SK-N-SH (cell line): ENCODE measurements at regions of chrX and their contacts with region 1.

Region 1: DNA sequence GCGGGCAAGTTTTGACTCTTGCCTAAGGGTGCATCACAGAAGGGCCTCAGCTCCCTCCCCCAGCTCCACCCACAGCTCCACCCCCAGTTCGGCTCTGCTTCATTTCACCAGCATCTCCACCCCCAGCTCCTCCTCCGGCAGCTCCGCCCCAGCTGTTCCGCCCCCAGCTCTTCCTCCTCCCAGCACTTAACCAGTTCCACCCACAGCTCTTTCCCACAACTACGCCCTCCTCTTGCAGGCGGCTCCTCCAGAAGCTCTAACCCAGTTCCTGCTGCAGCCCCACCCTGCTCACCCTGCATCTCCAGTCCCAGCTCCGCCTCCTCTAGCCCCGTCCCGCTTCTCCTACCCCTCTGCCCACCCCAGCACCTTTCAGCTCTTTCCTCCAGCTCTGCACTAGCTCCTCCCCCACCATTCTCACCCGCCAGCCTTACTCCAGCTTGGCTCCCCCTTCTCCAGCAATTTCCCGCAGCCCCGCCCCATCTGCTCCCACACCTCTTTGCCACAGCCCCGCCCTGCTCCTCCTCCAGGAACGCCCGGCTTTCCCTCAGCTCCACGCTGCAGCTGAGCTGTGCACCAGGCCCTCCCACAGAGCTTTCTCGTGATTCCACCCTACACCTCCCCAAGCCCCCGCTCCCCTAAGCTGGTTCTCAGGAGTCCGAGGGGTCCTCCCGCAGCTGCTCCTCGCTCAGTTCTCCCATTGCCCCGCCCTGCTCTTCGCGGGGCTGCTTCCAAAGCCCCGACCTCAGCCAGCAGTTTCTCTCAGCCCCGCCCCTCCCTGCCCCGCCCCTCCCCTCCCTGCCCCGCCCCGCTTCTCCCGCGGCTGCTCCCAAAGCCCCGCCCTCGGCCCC is 1.3 kb upstream of the EOLA1 start:
- DNase-seq: peak; percentile 74
- H3K4me3 ChIP-seq: peak overlapping the region; percentile 49 to 53
- H3K27ac ChIP-seq: peak overlapping the region; percentile 53 to 66
- H3K4me1 ChIP-seq: peaks cover 0 to 7% of the 10 kb centered on the region in 2 experiments; a peak in 1 of 4 replicates
- H3K27me3 ChIP-seq: no peaks in the 10 kb centered on the region
- CTCF ChIP-seq: no peak
- EP300 ChIP-seq: no peak
- RAD21 ChIP-seq: no peak

Region 2: DNA sequence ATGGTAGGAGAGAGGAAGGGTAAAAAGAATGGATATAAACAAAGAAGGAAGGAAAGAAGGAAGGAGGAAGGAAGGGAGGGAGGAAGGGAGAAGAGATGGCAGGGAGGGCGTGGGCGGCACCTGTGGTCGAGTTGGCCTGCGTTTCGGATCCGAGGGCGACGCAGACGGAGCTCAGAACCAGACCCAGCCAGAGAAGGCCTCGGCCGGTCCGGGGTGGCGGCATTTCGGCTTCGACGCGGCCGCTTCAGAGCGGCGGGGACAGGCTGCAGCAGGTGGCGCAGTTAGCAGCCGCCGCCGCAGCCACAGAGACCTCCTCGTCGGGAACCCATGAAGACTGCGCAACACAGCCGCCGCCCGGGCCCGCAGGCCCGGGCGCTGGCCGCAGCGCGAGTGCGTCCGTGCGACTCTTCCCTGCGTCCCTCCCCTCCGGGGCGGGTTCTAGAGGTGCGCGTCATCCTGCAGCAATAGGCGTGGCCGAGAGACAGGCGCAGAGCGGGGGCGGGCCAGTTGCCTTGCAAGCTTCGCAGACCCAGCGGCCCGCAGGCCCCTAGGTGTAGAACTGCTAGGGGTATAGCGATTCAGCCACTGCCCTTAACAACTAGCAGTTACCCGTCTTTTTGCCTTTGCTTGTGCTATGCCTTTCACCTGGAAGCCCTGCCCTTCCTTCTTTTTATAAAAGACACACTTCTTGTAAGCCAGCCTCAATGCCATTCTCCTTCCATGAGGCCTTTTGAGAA is 34.4 kb before region 1 on chrX and contains the start of gene IDS:
- CTCF ChIA-PET with region 1: interaction called, 5 read pairs
- POLR2A ChIA-PET with region 1: interaction called, 18 read pairs
- DNase-seq: peak; percentile 82
- H3K4me3 ChIP-seq: peak within 1 kb of the TSS; percentile 58 to 71
- H3K27ac ChIP-seq: peak within 1 kb of the TSS; percentile 67 to 88
- H3K4me1 ChIP-seq: peaks cover 0 to 10% of the 10 kb centered on the region in 2 experiments; a peak in 1 of 4 replicates
- H3K27me3 ChIP-seq: 0 out of 2 replicates have a peak, but pooled peaks cover 5% of the 10 kb centered on the region
- CTCF ChIP-seq: no peak
- EP300 ChIP-seq: no peak
- RAD21 ChIP-seq: no peak
- polyA plus RNA-seq, gene IDS: 78.4 and 103 TPM in 2 replicates